HCT116 (cell line): ENCODE measurements at regions of chr5 and their contacts with region 1.

Region 1: GRCh38 chr5:102681407-102681983 is 73.6 kb upstream of the PAM start:
- DNase-seq: peak; percentile 73
- ATAC-seq: peak; percentile 97
- H3K4me3 ChIP-seq: no peak overlapping the region
- H3K27ac ChIP-seq: no peak overlapping the region
- H3K4me1 ChIP-seq: peaks cover 0 to 5% of the 10 kb centered on the region in 2 experiments; a peak in 2 of 4 replicates
- H3K27me3 ChIP-seq: no peaks in the 10 kb centered on the region
- CTCF ChIP-seq: peak; percentile 87 to 93 (median 90)
- POLR2A ChIP-seq: no peak
- RAD21 ChIP-seq: peak; percentile 94

Region 2: GRCh38 chr5:102792705-102793104 is 111.2 kb after region 1 on chr5:
- CTCF ChIA-PET with region 1: interaction called, 3 read pairs
- POLR2A ChIA-PET with region 1: no interaction called
- RAD21 ChIA-PET with region 1: no interaction called
- intact Hi-C with region 1: loop called (anchors 1 kb)
- DNase-seq: no peak
- ATAC-seq: peak; percentile 66
- H3K4me3 ChIP-seq: no peak overlapping the region
- H3K27ac ChIP-seq: no peak overlapping the region
- H3K4me1 ChIP-seq: peaks cover 26 to 49% of the 10 kb centered on the region in 2 experiments
- H3K27me3 ChIP-seq: no peaks in the 10 kb centered on the region
- CTCF ChIP-seq: peak; percentile 16 to 40 (median 26); a peak in 3 of 6 replicates
- POLR2A ChIP-seq: no peak
- RAD21 ChIP-seq: peak; percentile 48

Region 3: DNA sequence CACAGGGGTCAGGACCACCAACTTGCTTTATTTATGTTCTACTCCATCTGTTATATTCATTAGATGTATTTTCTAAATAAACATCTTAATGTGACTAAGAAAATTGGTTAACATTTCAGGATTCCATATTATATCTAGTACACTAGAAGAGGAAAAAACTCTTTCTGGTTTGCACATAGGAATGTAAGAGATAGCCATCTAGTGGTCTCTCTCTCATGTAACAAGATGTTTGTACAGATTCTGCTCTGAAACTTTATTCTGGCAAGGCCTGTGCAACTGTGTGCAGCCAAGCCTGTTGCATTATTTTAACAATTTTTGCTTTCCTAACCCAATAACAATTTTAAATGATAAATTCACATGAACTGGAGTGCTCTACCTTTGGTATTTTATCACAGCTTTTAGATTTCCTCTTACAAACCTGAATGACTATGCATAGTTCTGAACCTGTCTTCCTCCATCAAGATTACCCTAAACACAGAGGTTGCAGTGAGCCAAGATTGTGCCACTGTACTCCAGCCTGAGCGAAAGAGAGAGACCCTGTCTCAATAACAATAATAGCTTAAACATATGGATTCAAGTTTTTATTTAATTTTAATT is 290.3 kb after region 1 on chr5:
- CTCF ChIA-PET with region 1: interaction called, 22 read pairs
- POLR2A ChIA-PET with region 1: no interaction called
- RAD21 ChIA-PET with region 1: interaction called, 3 to 4 read pairs
- intact Hi-C with region 1: loop called (anchors 2 kb)
- DNase-seq: peak; percentile 26
- ATAC-seq: peak; percentile 84
- H3K4me3 ChIP-seq: no peak overlapping the region
- H3K27ac ChIP-seq: peak overlapping the region; percentile 42; the same call in 1 of the 2 replicates
- H3K4me1 ChIP-seq: peaks cover 0 to 5% of the 10 kb centered on the region in 2 experiments; a peak in 1 of 4 replicates
- H3K27me3 ChIP-seq: no peaks in the 10 kb centered on the region
- CTCF ChIP-seq: peak; percentile 52 to 63 (median 59); a peak in 5 of 6 replicates
- POLR2A ChIP-seq: no peak
- RAD21 ChIP-seq: peak; percentile 81

Region 4: DNA sequence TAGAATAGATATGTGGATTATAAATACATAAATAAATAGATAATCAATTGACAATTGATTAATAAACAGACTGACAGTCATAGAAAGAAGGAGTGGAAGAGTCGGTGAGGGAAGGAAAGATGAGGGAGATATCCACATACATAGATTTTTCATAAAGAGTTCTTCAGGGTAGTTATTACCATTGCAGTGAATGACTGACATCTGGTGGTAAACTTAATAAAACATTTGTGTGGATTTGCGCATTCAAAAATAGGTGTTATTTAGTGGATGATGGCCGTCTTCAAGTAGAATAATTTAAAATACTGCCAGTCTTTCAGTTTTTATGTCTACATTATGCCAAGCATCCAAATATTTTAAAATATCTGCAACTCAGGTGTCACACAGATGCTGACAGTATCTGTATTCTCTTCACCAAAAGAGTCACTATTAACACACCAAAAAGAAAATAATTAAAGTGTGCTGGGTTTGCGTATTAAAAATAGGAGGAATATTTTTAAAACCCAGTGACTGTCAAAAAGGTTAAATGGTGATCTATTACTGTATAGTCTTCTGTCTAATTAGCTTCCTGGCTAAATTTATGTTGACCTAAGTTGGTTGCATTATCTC is 359.7 kb after region 1 on chr5:
- CTCF ChIA-PET with region 1: interaction called, 10 read pairs
- POLR2A ChIA-PET with region 1: no interaction called
- RAD21 ChIA-PET with region 1: no interaction called
- intact Hi-C with region 1: loop called (anchors 2 kb)
- DNase-seq: peak; percentile 49
- ATAC-seq: peak; percentile 61
- H3K4me3 ChIP-seq: no peak overlapping the region
- H3K27ac ChIP-seq: no peak overlapping the region
- H3K4me1 ChIP-seq: no peaks in the 10 kb centered on the region
- H3K27me3 ChIP-seq: no peaks in the 10 kb centered on the region
- CTCF ChIP-seq: peak; percentile 24 to 83 (median 56); a peak in 5 of 6 replicates
- POLR2A ChIP-seq: no peak
- RAD21 ChIP-seq: peak; percentile 84